Activated CD8-positive, alpha-beta T cell treated with anti-CD3 and anti-CD28 coated beads for 36 hours (primary cell): ENCODE measurements at regions of chr1 and their contacts with region 1.

Region 1: GRCh38 chr1:70134148-70134547 is 71.2 kb downstream of the LRRC40 start:
- DNase-seq: no peak
- ATAC-seq: no peak
- H3K4me3 Mint-ChIP-seq: no peak overlapping the region
- H3K27ac Mint-ChIP-seq: no peak overlapping the region
- H3K4me1 Mint-ChIP-seq: no peaks in the 10 kb centered on the region
- H3K27me3 Mint-ChIP-seq: peaks cover 9% of the 10 kb centered on the region
- CTCF ChIP-seq: no peak

Region 2: GRCh38 chr1:70117046-70117445 is 17.1 kb before region 1 on chr1:
- CTCF ChIA-PET with region 1: no interaction called
- POLR2A ChIA-PET with region 1: no interaction called
- intact Hi-C with region 1: no loop called
- DNase-seq: no peak
- ATAC-seq: no peak
- H3K4me3 Mint-ChIP-seq: no peak overlapping the region
- H3K27ac Mint-ChIP-seq: no peak overlapping the region
- H3K4me1 Mint-ChIP-seq: no peaks in the 10 kb centered on the region
- H3K27me3 Mint-ChIP-seq: peaks cover 8% of the 10 kb centered on the region
- CTCF ChIP-seq: no peak

Region 3: DNA sequence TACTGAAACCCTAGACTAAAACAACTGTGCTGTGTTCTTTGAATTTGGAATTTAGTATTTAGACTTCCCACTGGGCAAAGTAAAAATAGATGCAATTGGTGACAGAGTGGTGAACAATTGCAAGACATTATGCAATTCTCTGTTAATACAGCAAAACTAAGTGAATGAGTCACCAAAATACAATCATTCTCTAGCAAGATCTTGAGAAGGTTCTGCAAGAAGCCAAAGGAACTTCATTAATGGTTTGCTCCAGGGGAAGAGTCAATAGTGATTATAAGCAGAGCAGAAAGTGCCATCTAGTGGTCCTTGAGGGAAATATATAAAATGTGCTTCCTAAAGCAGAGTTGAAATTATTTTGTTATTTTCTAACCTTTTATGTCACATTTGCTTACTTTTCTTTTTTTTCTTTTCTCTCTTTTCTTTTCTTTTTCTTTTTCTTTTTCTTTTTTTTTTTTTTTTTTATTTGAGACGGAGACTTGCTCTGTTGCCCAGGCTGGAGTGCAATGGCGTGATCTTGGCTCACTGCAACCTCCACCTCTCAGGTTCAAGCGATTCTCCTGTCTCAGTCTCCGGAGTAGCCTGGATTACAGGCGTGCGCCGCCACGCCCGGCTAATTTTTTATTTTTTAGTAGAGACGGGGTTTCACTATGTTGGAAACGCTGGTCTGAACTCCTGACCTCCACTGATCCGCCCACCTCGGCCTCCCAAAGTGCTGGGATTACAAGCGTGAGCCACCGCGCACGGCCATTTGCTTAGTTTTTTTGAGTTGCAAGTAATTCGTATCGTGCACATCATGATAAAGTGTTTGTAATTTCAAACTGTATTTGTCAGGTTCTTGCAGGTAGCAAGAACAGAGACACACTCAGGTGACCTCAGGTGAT is 376.1 kb after region 1 on chr1:
- CTCF ChIA-PET with region 1: interaction called, 7 read pairs
- POLR2A ChIA-PET with region 1: no interaction called
- intact Hi-C with region 1: loop called (anchors 1 kb)
- DNase-seq: no peak
- ATAC-seq: peak; percentile 73
- H3K4me3 Mint-ChIP-seq: no peak overlapping the region
- H3K27ac Mint-ChIP-seq: no peak overlapping the region
- H3K4me1 Mint-ChIP-seq: peaks cover 3% of the 10 kb centered on the region
- H3K27me3 Mint-ChIP-seq: peaks cover 15% of the 10 kb centered on the region
- CTCF ChIP-seq: peak; percentile 73